ENCODE measurements at regions of chr10 and their contacts with region 1.

Region 1: GRCh38 chr10:62816331-62817120 is at the start of gene EGR2:
- DNase-seq: peak; percentile 90 to 95
- ATAC-seq: peak; percentile 78 to 88
- H3K4me3 ChIP-seq: peak within 1 kb of the TSS; percentile 58
- H3K27ac ChIP-seq: peak within 1 kb of the TSS; percentile 38 to 86; a peak in 4 of 6 replicates
- H3K4me1 ChIP-seq: peaks cover 18% of the 10 kb centered on the region
- CTCF ChIP-seq: no peak
- EP300 ChIP-seq: no peak
- POLR2A ChIP-seq: no peak
- RAD21 ChIP-seq: no peak
- polyA plus RNA-seq, gene EGR2: 1.6 and 4.4 TPM in 2 replicates

Region 2: GRCh38 chr10:62594093-62594520 is 222.4 kb before region 1 on chr10:
- CTCF ChIA-PET with region 1: interaction called, 42 read pairs
- POLR2A ChIA-PET with region 1: no interaction called
- DNase-seq: peak; percentile 26 to 58
- ATAC-seq: peak; percentile 94 to 98
- H3K4me3 ChIP-seq: no peak overlapping the region
- H3K27ac ChIP-seq: no peak overlapping the region
- H3K4me1 ChIP-seq: no peaks in the 10 kb centered on the region
- CTCF ChIP-seq: peak; percentile 84
- EP300 ChIP-seq: no peak
- POLR2A ChIP-seq: no peak
- RAD21 ChIP-seq: peak; percentile 88 to 96

Region 3: DNA sequence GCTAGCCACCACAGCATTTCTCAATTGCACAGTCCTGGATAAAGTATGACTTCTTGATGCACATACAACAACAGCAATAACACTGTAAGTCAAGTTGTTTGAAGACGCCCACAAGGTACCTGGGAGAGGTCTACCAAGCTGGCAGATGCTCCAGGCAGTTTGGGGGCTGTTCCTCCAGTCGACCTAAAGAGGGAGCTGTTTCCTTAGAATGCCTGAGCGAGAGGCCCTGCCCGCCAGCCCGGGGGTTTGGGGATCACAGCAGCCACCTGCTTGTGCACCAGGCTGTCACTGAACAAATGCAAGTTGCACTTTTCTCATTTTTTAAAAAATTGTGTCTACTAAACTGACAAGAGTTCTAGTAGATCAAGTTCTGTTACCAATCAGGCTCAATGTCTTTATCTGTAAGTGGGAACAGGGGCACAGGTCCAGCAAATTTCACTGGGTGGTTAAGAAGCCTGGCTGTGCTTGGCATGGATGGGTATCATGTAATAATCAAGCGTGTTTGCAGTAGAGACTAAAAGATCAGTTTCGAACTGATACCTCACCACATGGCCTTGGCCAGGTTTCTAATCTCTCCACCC is 205.8 kb before region 1 on chr10:
- CTCF ChIA-PET with region 1: interaction called, 62 read pairs
- POLR2A ChIA-PET with region 1: no interaction called
- DNase-seq: peak; percentile 35 to 53
- ATAC-seq: peak; percentile 66 to 89; a peak in 5 of 6 replicates
- H3K4me3 ChIP-seq: no peak overlapping the region
- H3K27ac ChIP-seq: no peak overlapping the region
- H3K4me1 ChIP-seq: peaks cover 17% of the 10 kb centered on the region; the same call in 2 of the 3 replicates
- CTCF ChIP-seq: peak; percentile 44
- EP300 ChIP-seq: no peak
- POLR2A ChIP-seq: no peak
- RAD21 ChIP-seq: peak; percentile 70 to 81

Region 4: GRCh38 chr10:62804356-62805230 is 11.9 kb before region 1 on chr10 and contains the start of gene ADO:
- CTCF ChIA-PET with region 1: interaction called, 4 read pairs
- POLR2A ChIA-PET with region 1: interaction called, 14 read pairs
- DNase-seq: peak; percentile 84 to 91
- ATAC-seq: peak; percentile 94
- H3K4me3 ChIP-seq: peak within 1 kb of the TSS; percentile 94
- H3K27ac ChIP-seq: peak within 1 kb of the TSS; percentile 97 to 100
- H3K4me1 ChIP-seq: peaks cover 25% of the 10 kb centered on the region
- CTCF ChIP-seq: no peak
- EP300 ChIP-seq: no peak
- POLR2A ChIP-seq: peak; percentile 83
- RAD21 ChIP-seq: no peak
- polyA plus RNA-seq, gene ADO: 22.0 and 23.2 TPM in 2 replicates

Region 5: DNA sequence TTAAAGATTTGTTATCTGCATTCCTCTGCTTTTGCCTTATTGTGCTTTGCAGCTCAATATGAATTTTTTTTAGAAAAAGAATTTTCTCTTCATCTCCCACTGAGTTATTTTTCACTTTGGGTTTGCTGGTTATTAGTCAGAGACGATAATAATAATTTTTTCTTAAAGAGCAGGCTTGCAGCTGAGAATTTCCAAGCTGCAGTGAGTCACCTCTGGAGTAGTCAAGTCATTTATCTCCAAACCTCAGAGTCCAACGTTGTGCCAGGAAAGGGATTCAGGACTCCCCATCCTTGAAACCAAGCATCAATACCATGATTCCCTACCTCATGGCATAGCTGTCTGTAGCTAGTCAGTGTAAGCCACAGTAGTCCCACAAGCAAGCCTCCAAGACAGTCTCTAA is 14.8 kb after region 1 on chr10:
- CTCF ChIA-PET with region 1: interaction called, 15 read pairs
- POLR2A ChIA-PET with region 1: no interaction called
- DNase-seq: no peak
- ATAC-seq: no peak
- H3K4me3 ChIP-seq: no peak overlapping the region
- H3K27ac ChIP-seq: no peak overlapping the region
- H3K4me1 ChIP-seq: no peaks in the 10 kb centered on the region
- CTCF ChIP-seq: no peak
- EP300 ChIP-seq: no peak
- POLR2A ChIP-seq: no peak
- RAD21 ChIP-seq: no peak

Region 6: DNA sequence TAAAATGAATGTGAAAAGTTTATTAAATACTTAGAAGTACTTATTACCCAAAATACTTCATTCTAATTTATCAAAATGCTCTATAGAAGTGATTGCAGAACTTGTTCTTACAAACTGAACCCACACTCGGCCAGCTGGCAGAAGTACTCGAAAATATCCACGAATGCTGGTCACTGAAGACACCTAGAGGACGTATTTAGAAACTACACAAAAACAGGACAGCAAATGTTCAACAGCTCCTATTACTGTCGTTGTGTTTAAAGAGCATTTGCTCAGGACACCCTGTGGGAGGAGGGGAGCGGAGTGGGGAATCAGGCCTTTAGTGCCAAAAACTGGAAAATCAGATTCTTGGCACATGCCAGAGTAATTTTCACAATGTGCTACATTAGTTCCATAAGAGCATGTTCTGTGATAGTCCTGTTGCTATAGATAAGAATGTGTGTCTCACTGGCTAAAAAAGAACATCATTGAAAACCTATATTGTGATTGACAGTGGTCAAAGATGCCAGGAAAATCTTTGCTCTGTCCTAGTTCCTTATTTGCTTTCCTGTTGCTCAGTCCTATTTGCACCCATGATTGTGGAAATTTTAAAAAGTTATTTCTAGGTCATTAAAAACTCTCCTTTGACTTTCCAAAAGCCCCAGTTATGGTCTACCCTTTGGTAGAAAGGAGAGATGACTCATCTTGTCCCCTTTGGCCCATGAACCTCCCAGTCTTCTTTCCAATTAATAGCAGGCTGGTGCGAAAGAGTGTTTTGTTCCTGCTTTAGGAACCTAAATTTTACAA is 267.6 kb after region 1 on chr10:
- CTCF ChIA-PET with region 1: interaction called, 26 read pairs
- POLR2A ChIA-PET with region 1: no interaction called
- DNase-seq: peak; percentile 41 to 75
- ATAC-seq: peak; percentile 93 to 97
- H3K4me3 ChIP-seq: no peak overlapping the region
- H3K27ac ChIP-seq: no peak overlapping the region
- H3K4me1 ChIP-seq: no peaks in the 10 kb centered on the region
- CTCF ChIP-seq: peak; percentile 75
- EP300 ChIP-seq: no peak
- POLR2A ChIP-seq: no peak
- RAD21 ChIP-seq: peak; percentile 83 to 85

Region 7: DNA sequence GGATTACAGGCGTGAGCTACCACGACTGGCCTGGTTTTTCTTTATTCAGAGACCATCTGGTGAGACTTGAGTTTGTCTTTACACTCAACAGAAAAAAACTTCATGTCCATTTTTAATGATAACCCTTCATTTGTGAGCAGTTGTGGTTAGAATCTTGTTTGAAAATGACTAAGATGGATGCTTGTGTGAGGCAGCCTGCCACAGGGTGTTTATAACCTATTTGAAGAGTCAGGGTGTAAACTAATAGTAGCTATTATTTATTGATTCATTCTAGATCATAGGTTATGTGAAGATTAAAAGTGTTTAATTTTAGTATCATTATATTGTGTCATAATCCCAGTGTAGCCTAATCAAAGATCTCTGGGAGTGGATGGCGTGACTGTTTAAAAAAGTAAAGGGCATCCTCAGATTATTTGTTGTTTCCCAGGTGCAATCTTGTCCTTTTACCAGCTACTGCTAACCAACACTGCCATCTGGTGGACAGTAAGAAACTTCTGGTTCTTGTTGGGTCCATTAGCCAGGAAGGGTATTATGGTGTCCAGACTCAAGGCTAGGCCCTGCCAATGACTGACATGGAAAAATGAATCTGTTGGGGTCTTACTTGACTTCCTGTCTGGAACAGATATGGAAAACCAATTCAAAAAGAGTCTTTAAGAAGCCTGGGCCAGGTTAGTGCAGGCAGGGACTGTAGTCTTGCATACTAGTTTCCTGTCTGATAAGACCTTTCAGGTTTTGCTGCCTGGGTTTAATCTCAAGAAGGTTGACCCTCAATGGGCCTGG is 341.5 kb after region 1 on chr10:
- CTCF ChIA-PET with region 1: interaction called, 27 read pairs
- POLR2A ChIA-PET with region 1: no interaction called
- DNase-seq: peak; percentile 57 to 92
- ATAC-seq: peak; percentile 80 to 88
- H3K4me3 ChIP-seq: no peak overlapping the region
- H3K27ac ChIP-seq: no peak overlapping the region
- H3K4me1 ChIP-seq: no peaks in the 10 kb centered on the region
- CTCF ChIP-seq: peak; percentile 85
- EP300 ChIP-seq: no peak
- POLR2A ChIP-seq: no peak
- RAD21 ChIP-seq: peak; percentile 89 to 91

Measured in A549 (cell line).